Psoas muscle (tissue), 8 donors: ENCODE measurements at regions of chr5 and their contacts with region 1.

Region 1: DNA sequence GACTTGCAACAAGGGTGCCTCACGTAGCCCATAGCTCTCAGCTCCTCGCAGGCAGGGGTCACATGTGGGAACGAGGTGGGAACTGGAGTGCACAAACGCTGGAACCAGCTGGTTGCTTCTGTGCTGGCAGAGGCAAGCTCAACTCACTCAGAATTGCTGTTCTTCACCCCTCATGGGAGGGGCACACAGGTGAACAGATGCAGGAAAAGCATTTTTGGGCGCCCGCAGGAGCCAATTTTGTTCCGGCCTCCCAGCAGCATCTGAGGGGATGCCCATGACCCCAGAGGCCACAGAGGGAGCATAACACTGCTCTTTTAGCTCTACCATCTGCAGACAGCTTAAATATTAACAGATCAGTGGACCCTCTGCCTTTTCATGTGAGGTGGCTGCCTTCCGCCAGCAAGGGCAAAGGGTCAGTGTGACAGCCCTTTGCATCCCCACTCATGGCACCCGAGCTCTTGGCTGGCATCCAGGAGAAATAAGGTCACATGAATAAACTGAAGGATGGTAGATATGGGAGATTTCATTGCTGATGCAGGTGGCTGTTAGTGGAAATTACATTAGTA is 196.2 kb downstream of the SLCO4C1 start:
- DNase-seq: no peak
- ATAC-seq: no peak
- H3K4me3 ChIP-seq: no peak overlapping the region
- H3K27ac ChIP-seq: no peak overlapping the region
- H3K4me1 ChIP-seq: no peaks in the 10 kb centered on the region
- H3K27me3 ChIP-seq: no peaks in the 10 kb centered on the region
- CTCF ChIP-seq: no peak

Region 2: DNA sequence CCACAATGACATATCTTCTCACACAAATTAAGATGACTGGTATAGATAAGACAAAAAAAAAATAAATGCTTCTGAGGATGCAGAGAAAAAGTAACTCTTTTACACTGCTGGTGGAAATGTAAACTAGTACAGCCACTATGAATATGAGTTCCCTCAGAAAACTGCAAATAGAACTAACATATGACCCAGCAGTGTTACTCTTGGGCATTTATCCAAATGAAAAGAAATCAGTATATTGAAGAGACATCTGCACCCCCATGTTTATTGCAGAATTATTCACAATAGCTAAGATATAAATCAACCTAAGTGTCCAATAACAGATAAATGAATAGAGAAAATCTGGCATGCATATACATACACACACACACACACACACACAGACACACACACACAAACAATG is 1647.7 kb before region 1 on chr5:
- intact Hi-C with region 1: loop called in 1 of 2 experiments (anchors 5 kb)
- DNase-seq: no peak
- ATAC-seq: no peak
- H3K4me3 ChIP-seq: no peak overlapping the region
- H3K27ac ChIP-seq: no peak overlapping the region
- H3K4me1 ChIP-seq: no peaks in the 10 kb centered on the region
- H3K27me3 ChIP-seq: no peaks in the 10 kb centered on the region
- CTCF ChIP-seq: no peak